ENCODE measurements at regions of chr2 and their contacts with region 1.

Region 1: GRCh38 chr2:55419679-55420438 is at the start of gene CCDC88A:
- DNase-seq: peak; percentile 97
- H3K4me3 ChIP-seq: peak within 1 kb of the TSS; percentile 98 to 99 (median 99)
- H3K27ac ChIP-seq: peak within 1 kb of the TSS; percentile 64
- H3K4me1 ChIP-seq: peaks cover 12% of the 10 kb centered on the region
- H3K27me3 ChIP-seq: peaks cover 0 to 4% of the 10 kb centered on the region in 2 experiments
- CTCF ChIP-seq: peak; percentile 8 to 43
- POLR2A ChIP-seq: peak; percentile 94
- total RNA-seq, gene CCDC88A: 76.8 and 77.4 TPM in 2 replicates

Region 2: GRCh38 chr2:55282110-55282917 is 137.5 kb before region 1 on chr2:
- CTCF ChIA-PET with region 1: no interaction called
- POLR2A ChIA-PET with region 1: no interaction called
- dilution Hi-C with region 1: no loop called
- intact Hi-C with region 1: loop called (anchors 1 kb)
- DNase-seq: peak; percentile 92
- H3K4me3 ChIP-seq: peak overlapping the region; percentile 52 to 89 (median 77)
- H3K27ac ChIP-seq: peak overlapping the region; percentile 49
- H3K4me1 ChIP-seq: no peaks in the 10 kb centered on the region
- H3K27me3 ChIP-seq: no peaks in the 10 kb centered on the region
- CTCF ChIP-seq: no peak
- POLR2A ChIP-seq: peak; percentile 98

Region 3: GRCh38 chr2:55364189-55365055 is 55.4 kb before region 1 on chr2:
- CTCF ChIA-PET with region 1: interaction called, 3 read pairs
- POLR2A ChIA-PET with region 1: no interaction called
- dilution Hi-C with region 1: no loop called
- intact Hi-C with region 1: loop called (anchors 1 kb)
- DNase-seq: peak; percentile 98
- H3K4me3 ChIP-seq: no peak overlapping the region
- H3K27ac ChIP-seq: no peak overlapping the region
- H3K4me1 ChIP-seq: peaks cover 24% of the 10 kb centered on the region
- H3K27me3 ChIP-seq: no peaks in the 10 kb centered on the region
- CTCF ChIP-seq: no peak
- POLR2A ChIP-seq: no peak

Region 4: DNA sequence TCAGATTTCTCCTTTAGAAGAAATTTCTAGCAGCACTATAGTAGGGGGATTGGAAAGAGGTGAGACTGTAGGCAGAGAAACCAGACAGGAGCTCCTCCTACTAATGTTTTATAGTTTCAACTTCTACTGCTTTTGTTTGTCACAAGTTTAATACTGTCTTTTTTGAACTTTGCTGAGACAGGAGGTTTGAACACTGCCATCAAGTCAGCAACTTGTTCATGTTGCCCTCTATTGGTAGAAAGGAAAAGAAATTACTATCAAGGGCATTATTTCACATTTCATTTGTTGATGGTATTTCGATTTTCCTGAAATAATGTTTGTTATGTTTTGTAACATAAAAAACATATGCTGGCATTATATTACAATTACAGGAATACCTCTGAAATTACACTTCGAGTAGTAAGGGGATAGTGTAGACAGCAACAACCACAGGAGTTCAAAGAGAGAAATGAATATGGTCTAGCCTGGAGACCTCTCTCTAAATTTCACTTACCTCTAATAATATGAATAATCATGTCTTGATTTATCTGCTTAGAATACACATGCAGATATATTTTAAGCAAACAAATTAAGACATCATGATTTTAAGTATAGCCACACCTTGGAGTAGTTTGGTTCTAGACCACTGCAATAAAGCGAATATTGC is 12.2 kb after region 1 on chr2:
- CTCF ChIA-PET with region 1: interaction called, 16 read pairs
- POLR2A ChIA-PET with region 1: interaction called, 6 read pairs
- dilution Hi-C with region 1: no loop called
- intact Hi-C with region 1: no loop called
- DNase-seq: peak; percentile 58
- H3K4me3 ChIP-seq: no peak overlapping the region
- H3K27ac ChIP-seq: no peak overlapping the region
- H3K4me1 ChIP-seq: peaks cover 2% of the 10 kb centered on the region
- H3K27me3 ChIP-seq: no peaks in the 10 kb centered on the region
- CTCF ChIP-seq: peak; percentile 30 to 52
- POLR2A ChIP-seq: no peak

Region 5: DNA sequence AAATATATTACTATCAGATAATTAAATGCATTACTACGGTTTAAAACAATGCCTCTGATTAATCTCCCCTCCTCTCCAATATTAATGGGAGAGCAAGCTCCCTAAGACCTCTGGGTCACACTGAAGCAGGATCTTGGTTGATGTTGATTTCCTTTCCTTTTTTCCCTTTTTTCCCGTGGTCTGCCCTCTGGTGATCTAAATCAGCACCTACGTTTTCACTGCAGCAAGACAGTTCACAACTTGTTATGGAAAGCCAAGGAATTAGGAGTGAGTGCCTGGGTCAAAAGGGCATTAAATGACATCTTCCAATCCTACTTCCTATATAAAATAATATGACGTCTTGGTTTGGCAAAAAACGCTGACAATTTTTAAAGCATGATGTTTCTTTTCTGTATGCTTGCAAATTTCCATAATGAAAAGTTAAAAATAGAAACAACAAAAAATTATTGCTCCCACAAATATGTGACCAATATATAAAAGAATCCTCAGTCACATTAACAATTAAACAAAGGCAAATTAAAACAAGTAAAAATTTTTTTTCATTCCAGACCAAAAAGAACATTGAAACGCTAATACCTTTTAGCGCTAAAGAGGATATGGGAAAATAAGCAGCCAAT is 91.8 kb after region 1 on chr2:
- CTCF ChIA-PET with region 1: interaction called, 4 read pairs
- POLR2A ChIA-PET with region 1: no interaction called
- dilution Hi-C with region 1: no loop called
- intact Hi-C with region 1: loop called (anchors 1 kb)
- DNase-seq: peak; percentile 71
- H3K4me3 ChIP-seq: no peak overlapping the region
- H3K27ac ChIP-seq: no peak overlapping the region
- H3K4me1 ChIP-seq: no peaks in the 10 kb centered on the region
- H3K27me3 ChIP-seq: no peaks in the 10 kb centered on the region
- CTCF ChIP-seq: peak; percentile 23 to 44
- POLR2A ChIP-seq: no peak

Region 6: DNA sequence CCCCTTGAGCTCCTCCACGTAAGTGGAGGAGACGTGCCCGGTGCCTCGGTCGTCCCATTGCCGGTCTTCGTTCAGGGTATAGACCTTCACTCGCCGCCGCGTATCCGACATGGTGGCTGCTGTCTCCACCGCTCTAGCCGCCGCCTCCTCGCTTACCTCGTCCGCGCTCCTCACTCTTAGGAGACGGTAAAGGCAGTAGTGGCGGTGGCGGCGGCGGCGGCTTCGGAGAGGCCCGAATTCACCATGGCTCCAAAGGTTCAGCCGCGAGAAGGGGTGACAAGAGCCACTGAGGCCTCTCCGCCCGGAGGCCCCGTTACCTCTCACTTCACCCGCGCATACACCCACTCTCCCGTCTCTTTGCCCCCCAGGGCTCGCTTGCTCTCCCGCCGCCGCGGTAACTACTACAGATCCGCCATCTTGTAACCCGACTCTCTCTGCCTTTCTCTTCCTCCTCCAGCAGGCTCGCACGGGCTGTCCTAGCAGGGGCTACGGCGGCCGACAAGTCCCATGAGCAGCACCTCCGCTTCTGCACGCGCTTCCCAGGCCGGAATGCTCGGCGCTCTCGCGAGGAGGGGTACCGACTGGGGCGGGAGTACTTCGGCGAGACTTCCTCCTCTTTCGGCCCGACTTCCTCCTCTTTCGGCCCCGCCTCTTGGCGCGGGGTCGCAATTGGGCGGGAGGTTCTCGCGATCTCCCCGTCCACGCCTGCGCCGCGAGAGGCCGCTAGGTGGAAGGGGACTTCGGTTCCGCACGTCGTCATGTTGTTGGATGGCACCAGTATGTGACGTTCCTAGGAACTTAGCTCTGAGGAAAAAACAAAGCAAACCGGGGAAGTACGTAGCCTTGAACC is 197.5 kb after region 1 on chr2 and contains the start of gene PPP4R3B:
- CTCF ChIA-PET with region 1: no interaction called
- POLR2A ChIA-PET with region 1: no interaction called
- dilution Hi-C with region 1: no loop called
- intact Hi-C with region 1: loop called (anchors 1 kb)
- DNase-seq: peak; percentile 100
- H3K4me3 ChIP-seq: peak within 1 kb of the TSS; percentile 64 to 98 (median 97)
- H3K27ac ChIP-seq: peak within 1 kb of the TSS; percentile 87
- H3K4me1 ChIP-seq: peaks cover 24% of the 10 kb centered on the region
- H3K27me3 ChIP-seq: no peaks in the 10 kb centered on the region
- CTCF ChIP-seq: peak; percentile 26 to 52
- POLR2A ChIP-seq: peak; percentile 59
- total RNA-seq, gene PPP4R3B: 49.0 and 51.5 TPM in 2 replicates